Naive thymus-derived CD4-positive, alpha-beta T cell (primary cell): ENCODE measurements at regions of chr7 and their contacts with region 1.

Region 1: GRCh38 chr7:90886416-90886815 is 290.3 kb downstream of the CDK14 start:
- DNase-seq: no peak
- ATAC-seq: no peak
- H3K4me3 ChIP-seq: no peak overlapping the region
- H3K4me3 Mint-ChIP-seq: no peak overlapping the region
- H3K27ac ChIP-seq: no peak overlapping the region
- H3K27ac Mint-ChIP-seq: no peak overlapping the region
- H3K4me1 ChIP-seq: no peaks in the 10 kb centered on the region
- H3K4me1 Mint-ChIP-seq: peaks cover 0 to 8% (median 0%) of the 10 kb centered on the region in 7 donors
- H3K27me3 ChIP-seq: no peaks in the 10 kb centered on the region
- H3K27me3 Mint-ChIP-seq: no peaks in the 10 kb centered on the region

Region 2: GRCh38 chr7:90824386-90825307 is 61.8 kb before region 1 on chr7:
- CTCF ChIA-PET with region 1: no interaction called
- POLR2A ChIA-PET with region 1: no interaction called
- intact Hi-C with region 1: no loop called
- DNase-seq: no peak
- ATAC-seq: no peak
- H3K4me3 ChIP-seq: no peak overlapping the region
- H3K4me3 Mint-ChIP-seq: no peak overlapping the region
- H3K27ac ChIP-seq: no peak overlapping the region
- H3K27ac Mint-ChIP-seq: no peak overlapping the region
- H3K4me1 ChIP-seq: no peaks in the 10 kb centered on the region
- H3K4me1 Mint-ChIP-seq: no peaks in the 10 kb centered on the region
- H3K27me3 ChIP-seq: no peaks in the 10 kb centered on the region
- H3K27me3 Mint-ChIP-seq: no peaks in the 10 kb centered on the region

Region 3: GRCh38 chr7:90938371-90938770 is 52.0 kb after region 1 on chr7:
- CTCF ChIA-PET with region 1: no interaction called
- POLR2A ChIA-PET with region 1: no interaction called
- intact Hi-C with region 1: loop called in 1 of 2 experiments (anchors 5 kb)
- DNase-seq: no peak
- ATAC-seq: no peak
- H3K4me3 ChIP-seq: no peak overlapping the region
- H3K4me3 Mint-ChIP-seq: no peak overlapping the region
- H3K27ac ChIP-seq: no peak overlapping the region
- H3K27ac Mint-ChIP-seq: no peak overlapping the region
- H3K4me1 ChIP-seq: no peaks in the 10 kb centered on the region
- H3K4me1 Mint-ChIP-seq: peaks cover 0 to 2% (median 0%) of the 10 kb centered on the region in 7 donors
- H3K27me3 ChIP-seq: no peaks in the 10 kb centered on the region
- H3K27me3 Mint-ChIP-seq: no peaks in the 10 kb centered on the region